Heart right ventricle (tissue), 16 donors: ENCODE measurements at regions of chr19 and their contacts with region 1.

Region 1: GRCh38 chr19:49436369-49437017 is 4.8 kb downstream of the SLC17A7 start:
- DNase-seq: no peak
- ATAC-seq: no peak
- H3K4me3 ChIP-seq: no peak overlapping the region
- H3K27ac ChIP-seq: no peak overlapping the region
- H3K4me1 ChIP-seq: peaks cover 0 to 6% (median 0%) of the 10 kb centered on the region in 9 donors
- H3K27me3 ChIP-seq: peaks cover 16 to 98% (median 94%) of the 10 kb centered on the region in 7 donors
- CTCF ChIP-seq: no peak

Region 2: GRCh38 chr19:49403404-49404187 is 32.9 kb before region 1 on chr19:
- intact Hi-C with region 1: loop called in 1 of 10 experiments (anchors 5 kb)
- DNase-seq: no peak
- ATAC-seq: no peak
- H3K4me3 ChIP-seq: no peak overlapping the region
- H3K27ac ChIP-seq: no peak overlapping the region
- H3K4me1 ChIP-seq: no peaks in the 10 kb centered on the region
- H3K27me3 ChIP-seq: peaks cover 0 to 12% (median 0%) of the 10 kb centered on the region in 7 donors
- CTCF ChIP-seq: no peak